ENCODE measurements at regions of chr11 and their contacts with region 1.

Region 1: GRCh38 chr11:47797633-47798032 is 30.5 kb upstream of the FNBP4 start:
- DNase-seq: no peak
- ATAC-seq: no peak
- H3K4me3 ChIP-seq: no peak overlapping the region
- H3K27ac ChIP-seq: no peak overlapping the region
- H3K4me1 ChIP-seq: peaks cover 0 to 15% (median 4%) of the 10 kb centered on the region in 9 donors
- H3K27me3 ChIP-seq: no peaks in the 10 kb centered on the region
- CTCF ChIP-seq: no peak

Region 2: GRCh38 chr11:47758076-47758475 is 39.6 kb before region 1 on chr11:
- intact Hi-C with region 1: loop called in 2 of 10 experiments (anchors 5 to 10 kb)
- DNase-seq: no peak
- ATAC-seq: no peak
- H3K4me3 ChIP-seq: no peak overlapping the region
- H3K27ac ChIP-seq: no peak overlapping the region
- H3K4me1 ChIP-seq: peaks cover 0 to 10% (median 0%) of the 10 kb centered on the region in 9 donors
- H3K27me3 ChIP-seq: no peaks in the 10 kb centered on the region
- CTCF ChIP-seq: no peak

Region 3: DNA sequence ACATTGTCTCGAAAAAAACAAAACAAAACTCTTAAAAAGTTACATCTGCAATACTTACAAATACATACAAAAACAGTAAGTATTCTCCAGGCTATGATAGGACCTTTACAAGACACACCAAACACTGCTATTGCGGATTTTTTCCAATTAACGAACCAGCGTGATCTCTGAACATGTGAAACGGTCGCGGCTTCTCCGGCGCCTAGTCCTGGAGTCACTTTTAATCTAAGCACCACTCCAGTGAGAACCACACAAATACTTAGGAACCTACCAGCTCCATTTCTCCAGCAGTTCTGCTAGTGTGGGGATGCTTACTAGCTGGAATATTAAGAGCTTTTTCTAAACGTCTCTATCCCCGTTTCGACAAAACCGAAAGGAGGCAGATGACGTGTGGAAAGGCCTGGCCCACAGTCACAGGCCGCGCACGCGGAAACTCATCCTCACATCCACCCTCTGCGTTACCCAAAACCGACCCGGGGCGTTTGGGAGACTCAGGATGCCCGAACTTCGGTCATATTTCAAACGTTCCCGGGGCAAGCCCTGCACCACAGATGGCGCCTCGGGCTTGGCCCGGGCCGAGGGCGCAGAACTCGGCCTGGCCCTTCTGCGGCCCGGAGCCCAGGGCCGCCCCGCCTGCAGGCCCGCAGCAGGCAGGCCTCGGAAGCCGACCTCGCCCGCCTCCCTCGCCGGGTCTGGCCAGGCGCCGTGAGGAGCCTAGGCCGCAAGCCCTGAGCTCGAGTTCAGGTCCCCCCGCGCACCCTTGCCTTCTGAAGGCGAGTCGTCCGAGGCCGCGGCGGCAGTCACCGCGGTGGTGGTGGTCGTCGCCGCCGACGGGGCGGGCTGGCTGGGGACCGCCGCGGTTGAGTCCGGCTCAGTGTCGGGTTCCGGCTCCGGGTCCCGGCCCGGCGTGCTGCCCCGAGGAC is 31.1 kb before region 1 on chr11:
- intact Hi-C with region 1: loop called in 1 of 10 experiments (anchors 5 kb)
- DNase-seq: peak; percentile 66 to 69
- ATAC-seq: peak in 7 of 8 donors; percentile 8 to 51 (median 43)
- H3K4me3 ChIP-seq: peak overlapping the region; percentile 78 to 100 (median 91)
- H3K27ac ChIP-seq: peak overlapping the region; percentile 93 to 100 (median 98)
- H3K4me1 ChIP-seq: peaks cover 4 to 40% (median 33%) of the 10 kb centered on the region in 9 donors
- H3K27me3 ChIP-seq: no peaks in the 10 kb centered on the region
- CTCF ChIP-seq: no peak

Region 4: DNA sequence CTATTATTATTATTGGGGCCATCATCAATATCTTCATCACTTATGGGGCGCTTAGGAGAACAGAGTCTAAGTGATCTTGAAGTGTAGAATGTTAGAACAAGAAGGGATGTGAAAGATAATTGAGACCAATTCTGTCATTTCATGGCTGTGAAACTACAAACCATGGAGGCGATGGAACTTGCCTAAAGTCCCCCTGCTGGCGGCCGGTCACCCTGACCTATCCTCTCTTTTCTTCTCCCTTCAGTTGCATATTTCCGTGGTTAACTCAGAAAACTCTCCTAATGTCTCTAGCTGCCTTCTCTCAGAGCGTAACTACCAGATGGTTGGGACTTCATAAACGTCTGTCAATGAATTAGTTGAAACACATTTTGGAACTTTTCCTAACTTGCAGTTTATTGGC is 412.4 kb after region 1 on chr11:
- intact Hi-C with region 1: no loop called
- DNase-seq: no peak
- ATAC-seq: no peak
- H3K4me3 ChIP-seq: no peak overlapping the region
- H3K27ac ChIP-seq: no peak overlapping the region
- H3K4me1 ChIP-seq: no peaks in the 10 kb centered on the region
- H3K27me3 ChIP-seq: no peaks in the 10 kb centered on the region
- CTCF ChIP-seq: peak in 4 of 9 donors; percentile 7 to 29 (median 16)

Measured in heart right ventricle (tissue), 16 donors.